Endothelial cell of umbilical vein (primary cell): ENCODE measurements at regions of chr11 and their contacts with region 1.

Region 1: DNA sequence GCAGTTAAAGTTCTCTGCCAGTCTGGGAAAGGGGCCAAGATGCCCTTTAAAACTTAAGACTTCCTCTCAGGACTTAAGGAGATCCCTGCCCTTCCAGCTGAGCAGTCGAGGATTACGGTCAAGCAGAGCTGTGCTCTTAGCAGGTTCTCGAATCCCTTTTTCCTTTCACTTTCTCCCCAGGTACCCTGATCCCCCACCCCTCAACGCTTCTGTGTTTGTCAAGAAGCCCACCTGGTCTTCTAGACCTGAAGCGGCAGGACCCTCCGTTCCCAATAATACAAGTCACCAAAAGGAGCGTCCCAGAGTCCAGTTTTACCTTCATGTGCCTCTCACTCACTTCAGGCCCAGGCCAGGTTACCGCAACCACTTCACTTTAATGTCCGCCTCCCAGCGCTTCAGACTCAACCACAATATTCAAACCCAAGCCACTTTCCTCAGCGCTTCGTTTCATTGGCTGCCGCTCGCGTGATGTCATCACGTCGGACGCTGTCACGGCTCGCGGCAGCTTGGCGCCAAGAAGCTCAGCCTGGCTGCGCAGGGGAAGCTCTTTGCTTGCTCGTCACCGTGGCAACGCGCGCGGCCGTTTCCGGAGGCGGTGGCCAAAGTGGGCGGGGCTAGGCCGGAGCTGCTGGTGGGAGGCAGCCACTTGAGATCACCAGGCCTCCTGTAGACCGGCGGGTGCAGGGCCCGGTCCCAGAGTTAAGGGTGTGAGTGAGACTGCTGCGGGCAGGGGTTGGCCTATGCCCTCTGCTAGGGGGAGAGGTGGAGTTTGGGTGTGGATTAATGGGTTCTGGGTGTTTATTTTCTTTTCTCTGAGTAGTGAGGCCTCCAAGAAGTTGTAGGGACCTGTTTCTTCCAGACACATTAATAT is at the starts of genes KIF18A and METTL15:
- DNase-seq: peak; percentile 100
- H3K4me3 ChIP-seq: peak within 1 kb of the TSS; percentile 74 to 99 (median 87)
- H3K27ac ChIP-seq: peak within 1 kb of the TSS; percentile 98
- H3K4me1 ChIP-seq: peaks cover 36% of the 10 kb centered on the region
- H3K27me3 ChIP-seq: no peaks in the 10 kb centered on the region
- CTCF ChIP-seq: no peak
- POLR2A ChIP-seq: peak; percentile 68
- total RNA-seq, gene KIF18A: 14.1 and 18.5 TPM in 2 replicates
- total RNA-seq, gene METTL15: 10.9 and 12.1 TPM in 2 replicates

Region 2: GRCh38 chr11:27934830-27935145 is 173.2 kb before region 1 on chr11:
- CTCF ChIA-PET with region 1: interaction called, 3 read pairs
- POLR2A ChIA-PET with region 1: no interaction called
- dilution Hi-C with region 1: no loop called
- intact Hi-C with region 1: loop called (anchors 5 kb)
- DNase-seq: peak; percentile 62
- H3K4me3 ChIP-seq: no peak overlapping the region
- H3K27ac ChIP-seq: peak overlapping the region; percentile 78
- H3K4me1 ChIP-seq: peaks cover 18% of the 10 kb centered on the region
- H3K27me3 ChIP-seq: no peaks in the 10 kb centered on the region
- CTCF ChIP-seq: no peak
- POLR2A ChIP-seq: no peak

Region 3: DNA sequence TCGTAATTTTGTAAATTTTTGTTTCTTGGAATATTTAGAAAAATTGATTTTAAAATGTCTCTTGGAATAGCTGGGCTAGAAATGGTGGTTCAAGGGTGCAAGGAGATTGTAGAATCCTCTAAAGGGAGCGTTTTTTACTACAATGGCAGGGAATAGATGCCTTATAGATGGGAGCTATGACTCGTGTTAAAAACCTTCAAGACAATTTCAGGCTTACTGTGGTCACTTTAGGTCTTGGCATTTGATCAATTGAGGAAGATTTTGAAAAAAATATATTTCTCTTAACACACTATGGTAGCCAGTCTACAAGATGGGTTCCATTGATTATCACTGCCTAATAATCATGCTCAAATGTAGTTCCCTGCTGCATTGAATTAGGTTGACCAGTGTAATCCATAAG is 25.2 kb after region 1 on chr11:
- CTCF ChIA-PET with region 1: no interaction called
- POLR2A ChIA-PET with region 1: no interaction called
- dilution Hi-C with region 1: no loop called
- intact Hi-C with region 1: no loop called
- DNase-seq: no peak
- H3K4me3 ChIP-seq: no peak overlapping the region
- H3K27ac ChIP-seq: no peak overlapping the region
- H3K4me1 ChIP-seq: no peaks in the 10 kb centered on the region
- H3K27me3 ChIP-seq: no peaks in the 10 kb centered on the region
- CTCF ChIP-seq: no peak
- POLR2A ChIP-seq: no peak

Region 4: GRCh38 chr11:28146123-28146751 is 38.3 kb after region 1 on chr11:
- CTCF ChIA-PET with region 1: interaction called, 7 read pairs
- POLR2A ChIA-PET with region 1: no interaction called
- dilution Hi-C with region 1: no loop called
- intact Hi-C with region 1: loop called (anchors 1 kb)
- DNase-seq: peak; percentile 87
- H3K4me3 ChIP-seq: no peak overlapping the region
- H3K27ac ChIP-seq: peak overlapping the region; percentile 70
- H3K4me1 ChIP-seq: peaks cover 18% of the 10 kb centered on the region
- H3K27me3 ChIP-seq: no peaks in the 10 kb centered on the region
- CTCF ChIP-seq: no peak
- POLR2A ChIP-seq: no peak

Region 5: GRCh38 chr11:28343276-28344233 is 235.6 kb after region 1 on chr11:
- CTCF ChIA-PET with region 1: no interaction called
- POLR2A ChIA-PET with region 1: no interaction called
- dilution Hi-C with region 1: no loop called
- intact Hi-C with region 1: loop called (anchors 5 kb)
- DNase-seq: peak; percentile 90
- H3K4me3 ChIP-seq: peak overlapping the region in 1 of 3 experiments; percentile 11
- H3K27ac ChIP-seq: peak overlapping the region; percentile 85
- H3K4me1 ChIP-seq: peaks cover 14% of the 10 kb centered on the region
- H3K27me3 ChIP-seq: no peaks in the 10 kb centered on the region
- CTCF ChIP-seq: no peak
- POLR2A ChIP-seq: no peak

Region 6: GRCh38 chr11:28697920-28698827 is 590.2 kb after region 1 on chr11:
- CTCF ChIA-PET with region 1: no interaction called
- POLR2A ChIA-PET with region 1: interaction called, 3 read pairs
- dilution Hi-C with region 1: no loop called
- intact Hi-C with region 1: loop called (anchors 2 kb)
- DNase-seq: peak; percentile 60
- H3K4me3 ChIP-seq: no peak overlapping the region
- H3K27ac ChIP-seq: no peak overlapping the region
- H3K4me1 ChIP-seq: peaks cover 21% of the 10 kb centered on the region
- H3K27me3 ChIP-seq: no peaks in the 10 kb centered on the region
- CTCF ChIP-seq: peak; percentile 73 to 80
- POLR2A ChIP-seq: no peak

Region 7: DNA sequence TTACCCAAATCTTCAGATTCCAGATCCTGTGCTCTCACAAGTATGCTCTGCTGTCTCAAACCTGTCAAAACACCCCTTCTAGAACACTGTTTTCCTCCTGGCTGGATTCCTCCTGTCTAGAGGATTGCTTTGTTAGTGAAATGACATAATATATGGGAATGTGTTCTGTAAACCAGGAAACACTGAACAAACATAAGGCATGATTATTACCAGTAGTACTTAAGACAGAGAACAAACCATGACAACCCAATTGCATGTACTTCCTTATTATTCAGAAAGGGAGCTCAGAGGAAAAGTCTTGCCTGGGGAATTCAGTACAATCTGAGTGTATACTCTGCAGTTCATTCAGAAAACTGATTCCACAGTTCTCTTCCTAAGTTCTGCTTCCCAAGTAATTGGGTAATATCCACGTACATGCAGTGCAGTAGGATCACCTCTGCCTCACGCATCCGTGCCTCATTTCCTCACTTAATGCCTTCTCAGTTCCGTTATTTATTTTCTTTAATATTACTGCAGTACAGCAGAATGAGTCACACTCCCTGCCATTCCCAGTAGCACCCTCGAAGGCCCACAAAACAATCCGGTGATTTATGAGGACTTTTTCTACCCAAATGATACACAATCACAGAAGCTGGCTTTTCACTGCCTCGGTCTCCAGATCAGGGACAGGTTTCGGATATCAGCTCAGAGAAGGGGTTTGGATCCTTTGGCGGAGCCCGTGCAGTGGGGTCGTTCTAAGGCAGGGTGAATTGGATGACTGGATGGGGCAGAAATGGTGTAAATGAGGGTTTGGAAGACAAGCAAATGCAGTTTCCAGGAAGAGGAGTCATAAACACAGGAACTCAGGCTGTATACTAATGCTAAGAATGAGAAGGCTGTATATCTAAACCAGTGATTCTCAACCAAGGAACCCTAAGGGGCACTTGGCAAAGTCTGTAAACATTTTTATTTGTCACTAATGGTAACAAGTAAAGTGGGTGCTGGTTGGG is 1012.0 kb after region 1 on chr11:
- CTCF ChIA-PET with region 1: no interaction called
- POLR2A ChIA-PET with region 1: no interaction called
- dilution Hi-C with region 1: no loop called
- intact Hi-C with region 1: loop called (anchors 1 kb)
- DNase-seq: peak; percentile 99
- H3K4me3 ChIP-seq: peak overlapping the region in 2 of 3 experiments; percentile 25 to 62
- H3K27ac ChIP-seq: peak overlapping the region; percentile 100
- H3K4me1 ChIP-seq: peaks cover 33% of the 10 kb centered on the region
- H3K27me3 ChIP-seq: no peaks in the 10 kb centered on the region
- CTCF ChIP-seq: no peak
- POLR2A ChIP-seq: peak; percentile 74